Right ventricle myocardium superior (tissue), 1 donor: ENCODE measurements at regions of chrX and their contacts with region 1.

Region 1: DNA sequence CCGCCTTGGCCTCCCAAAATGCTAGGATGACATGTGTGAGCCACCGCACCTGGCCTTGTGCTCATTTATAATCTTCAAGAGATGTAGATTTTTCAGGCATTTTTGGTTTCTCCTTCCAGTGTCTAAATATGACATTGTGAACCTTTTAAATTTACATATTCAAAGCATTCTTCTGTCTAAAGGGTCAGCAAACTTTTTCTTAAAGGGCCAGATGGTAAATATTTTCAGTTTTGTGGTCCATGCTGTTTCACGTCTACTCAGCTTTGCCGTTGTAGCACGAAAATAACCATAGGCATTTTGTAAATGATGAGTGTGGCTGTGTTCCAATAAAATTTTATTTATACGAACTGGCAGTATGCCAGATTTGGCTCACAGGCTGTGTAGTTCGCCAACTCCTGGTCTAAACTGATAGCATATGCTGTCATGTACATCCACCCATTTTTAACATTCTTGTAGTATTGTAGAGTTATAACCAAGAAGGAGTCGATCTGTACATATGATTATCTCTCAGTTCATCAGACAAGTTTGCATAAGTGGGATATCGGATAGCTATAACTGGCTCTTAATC is 12.7 kb upstream of the GCNA start:
- DNase-seq: no peak
- ATAC-seq: peak; percentile 41

Region 2: GRCh38 chrX:71393919-71394318 is 171.6 kb before region 1 on chrX:
- intact Hi-C with region 1: loop called (anchors 10 kb)
- DNase-seq: no peak
- ATAC-seq: no peak